ENCODE measurements at regions of chr6 and their contacts with region 1.

Region 1: DNA sequence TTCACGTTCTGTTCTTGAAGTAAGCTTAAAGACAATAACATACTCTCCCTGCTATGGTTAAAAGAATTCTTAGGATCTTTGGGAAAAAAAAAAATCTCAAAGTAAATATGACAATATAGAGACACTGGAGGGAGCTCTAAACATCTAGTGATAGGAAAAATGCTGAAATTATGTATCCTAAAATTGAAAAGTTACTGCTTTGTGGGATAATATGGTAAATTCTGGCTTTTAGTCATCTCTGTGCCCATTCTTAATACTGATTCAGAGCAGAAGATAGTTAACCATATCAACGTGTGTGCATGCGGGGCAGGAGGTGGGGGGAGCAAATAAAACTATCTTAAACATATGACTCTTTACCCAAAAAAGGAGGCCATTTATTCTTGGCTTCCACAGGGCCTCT is 165.4 kb downstream of the GMPR start:
- DNase-seq: no peak
- ATAC-seq: no peak
- H3K4me3 ChIP-seq: no peak overlapping the region
- H3K27ac ChIP-seq: no peak overlapping the region
- H3K4me1 ChIP-seq: no peaks in the 10 kb centered on the region
- H3K27me3 ChIP-seq: no peaks in the 10 kb centered on the region
- CTCF ChIP-seq: peak in 2 of 3 experiments; percentile 29 to 35; a peak in 3 of 6 replicates
- POLR2A ChIP-seq: no peak
- RAD21 ChIP-seq: peak; percentile 55

Region 2: GRCh38 chr6:16770701-16771569 is 367.1 kb after region 1 on chr6:
- CTCF ChIA-PET with region 1: interaction called, 3 read pairs
- POLR2A ChIA-PET with region 1: no interaction called
- RAD21 ChIA-PET with region 1: no interaction called
- intact Hi-C with region 1: loop called (anchors 5 kb)
- DNase-seq: peak; percentile 68
- ATAC-seq: peak; percentile 74
- H3K4me3 ChIP-seq: peak overlapping the region in 1 of 2 experiments; percentile 6; a peak in 2 of 4 replicates
- H3K27ac ChIP-seq: peak overlapping the region; percentile 70; the same call in 1 of the 2 replicates
- H3K4me1 ChIP-seq: peaks cover 47 to 57% of the 10 kb centered on the region in 2 experiments
- H3K27me3 ChIP-seq: no peaks in the 10 kb centered on the region
- CTCF ChIP-seq: peak; percentile 86 to 97 (median 96)
- POLR2A ChIP-seq: no peak
- RAD21 ChIP-seq: peak; percentile 71

Measured in HCT116 (cell line).